IMR-90 (cell line): ENCODE measurements at regions of chr4 and their contacts with region 1.

Region 1: DNA sequence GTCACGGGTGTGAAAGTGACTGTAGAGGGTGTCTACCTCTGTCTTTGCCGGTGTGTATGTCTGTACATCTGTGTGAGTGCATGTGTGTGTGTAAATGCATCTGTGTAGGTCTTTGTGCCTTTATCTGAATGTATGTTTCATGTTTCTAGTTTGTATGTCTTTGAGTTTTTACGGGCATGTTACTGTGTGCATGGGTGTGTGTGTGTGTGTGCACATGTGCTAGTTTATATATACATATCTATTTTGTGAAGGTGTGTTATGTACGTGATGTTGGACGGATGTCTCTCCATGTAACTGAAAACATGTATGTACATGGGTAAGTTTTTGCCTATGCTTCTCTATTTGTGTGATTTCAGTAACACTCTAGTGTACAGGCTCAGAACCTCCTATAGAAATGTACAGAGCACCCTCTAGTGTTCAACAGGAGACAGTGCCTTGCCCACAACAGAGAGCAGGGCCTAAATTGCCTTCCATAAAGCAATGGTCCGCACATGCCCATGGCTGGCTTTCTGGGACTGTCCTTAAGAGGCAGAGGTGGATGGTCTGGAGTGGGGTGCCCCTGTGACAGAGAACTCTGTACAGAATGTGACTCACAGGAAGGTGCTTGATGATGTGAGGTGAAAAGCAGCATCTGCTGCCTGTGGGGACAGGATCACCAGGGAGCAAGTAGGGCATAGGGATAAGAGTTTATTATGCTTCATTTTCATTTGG is 343.5 kb downstream of the RAPGEF2 start:
- DNase-seq: peak; percentile 84
- ATAC-seq: peak; percentile 94
- H3K4me3 ChIP-seq: no peak overlapping the region
- H3K27ac ChIP-seq: no peak overlapping the region
- H3K4me1 ChIP-seq: peaks cover 3% of the 10 kb centered on the region
- H3K27me3 ChIP-seq: no peaks in the 10 kb centered on the region
- CTCF ChIP-seq: peak; percentile 94
- POLR2A ChIP-seq: no peak
- RAD21 ChIP-seq: peak; percentile 97

Region 2: GRCh38 chr4:158253350-158253980 is 1193.0 kb before region 1 on chr4:
- CTCF ChIA-PET with region 1: no interaction called
- POLR2A ChIA-PET with region 1: no interaction called
- dilution Hi-C with region 1: no loop called
- in situ Hi-C with region 1: no loop called
- intact Hi-C with region 1: loop called (anchors 10 kb)
- DNase-seq: peak; percentile 63
- ATAC-seq: peak; percentile 88
- H3K4me3 ChIP-seq: no peak overlapping the region
- H3K27ac ChIP-seq: no peak overlapping the region
- H3K4me1 ChIP-seq: no peaks in the 10 kb centered on the region
- H3K27me3 ChIP-seq: peaks cover 2% of the 10 kb centered on the region; the same call in 1 of the 2 replicates
- CTCF ChIP-seq: peak; percentile 71
- POLR2A ChIP-seq: no peak
- RAD21 ChIP-seq: peak; percentile 73

Region 3: DNA sequence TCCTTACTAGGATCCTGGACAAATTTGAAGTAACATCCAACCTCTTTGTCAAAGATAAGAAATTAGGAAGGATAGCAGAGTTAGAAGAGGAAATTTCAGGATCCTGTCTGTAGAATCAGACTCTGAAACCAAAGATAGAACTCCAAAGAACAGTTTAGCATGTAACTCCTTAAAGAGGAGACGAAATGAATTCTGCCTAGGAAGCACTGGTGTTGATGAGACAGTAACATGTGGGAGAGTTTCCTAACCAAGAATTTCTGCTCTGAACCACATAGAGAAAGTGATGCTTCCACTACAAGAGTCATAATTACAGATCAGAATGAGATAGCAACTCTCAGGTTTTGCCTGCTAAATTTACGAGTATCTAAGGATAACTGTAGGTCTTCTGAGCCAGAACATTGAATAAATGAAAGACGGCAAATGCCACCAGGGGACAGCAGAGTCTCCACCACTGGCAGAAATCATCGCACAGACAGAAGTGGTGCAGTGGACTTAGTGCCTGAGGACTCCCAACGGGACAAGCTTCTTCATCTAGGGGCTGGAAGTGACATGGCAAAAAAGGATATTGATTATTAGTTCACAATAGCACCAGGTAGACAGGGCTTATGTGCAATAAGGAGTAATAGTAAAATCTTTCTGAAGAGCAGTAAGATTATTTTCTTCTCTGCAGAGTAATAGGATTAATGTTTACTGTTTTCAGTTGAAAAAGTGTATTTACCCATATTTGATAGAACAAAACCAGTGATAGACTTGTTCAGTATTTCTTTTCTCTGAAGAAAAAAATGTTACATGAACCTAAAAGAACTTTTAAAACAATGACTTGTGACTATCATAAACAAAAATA is 716.5 kb before region 1 on chr4:
- CTCF ChIA-PET with region 1: no interaction called
- POLR2A ChIA-PET with region 1: no interaction called
- dilution Hi-C with region 1: no loop called
- in situ Hi-C with region 1: loop called (anchors 10 kb)
- intact Hi-C with region 1: loop called (anchors 2 kb)
- DNase-seq: peak; percentile 75
- ATAC-seq: peak; percentile 100
- H3K4me3 ChIP-seq: no peak overlapping the region
- H3K27ac ChIP-seq: no peak overlapping the region
- H3K4me1 ChIP-seq: no peaks in the 10 kb centered on the region
- H3K27me3 ChIP-seq: peaks cover 8% of the 10 kb centered on the region
- CTCF ChIP-seq: peak; percentile 98
- POLR2A ChIP-seq: no peak
- RAD21 ChIP-seq: peak; percentile 97

Region 4: DNA sequence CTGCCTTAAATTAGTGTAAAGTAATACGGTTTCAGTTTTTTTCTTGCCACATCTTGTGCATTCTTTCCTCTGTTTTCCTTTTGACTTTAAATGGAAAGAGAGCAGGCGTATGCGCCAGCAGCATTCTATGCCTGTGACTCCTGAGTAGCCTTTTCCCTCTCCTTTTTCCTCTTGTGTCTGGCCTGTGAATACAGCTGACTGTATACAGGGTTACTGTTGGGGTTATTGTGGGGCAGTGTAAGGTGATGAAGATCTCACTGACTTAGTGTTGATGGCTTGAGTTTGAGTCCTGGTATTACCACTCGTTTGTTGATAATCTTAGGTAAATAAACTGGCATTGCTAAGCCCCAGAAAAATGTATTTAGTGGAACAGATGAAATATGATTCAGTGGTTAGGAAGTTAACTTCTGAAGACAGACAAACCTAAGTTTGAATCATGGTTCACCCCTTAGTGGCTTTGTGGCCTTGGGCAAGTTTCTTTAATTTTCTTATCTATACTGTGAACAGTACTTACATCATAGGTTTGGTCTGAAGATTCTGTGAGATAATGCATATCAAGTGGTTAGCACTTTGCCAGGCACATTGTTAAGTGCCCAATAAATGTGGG is 572.5 kb before region 1 on chr4:
- CTCF ChIA-PET with region 1: no interaction called
- POLR2A ChIA-PET with region 1: no interaction called
- dilution Hi-C with region 1: no loop called
- in situ Hi-C with region 1: no loop called
- intact Hi-C with region 1: loop called (anchors 5 kb)
- DNase-seq: peak; percentile 96
- ATAC-seq: peak; percentile 97
- H3K4me3 ChIP-seq: no peak overlapping the region
- H3K27ac ChIP-seq: no peak overlapping the region
- H3K4me1 ChIP-seq: peaks cover 10% of the 10 kb centered on the region
- H3K27me3 ChIP-seq: no peaks in the 10 kb centered on the region
- CTCF ChIP-seq: no peak
- POLR2A ChIP-seq: no peak
- RAD21 ChIP-seq: no peak; the same call in 1 of the 2 replicates

Region 5: DNA sequence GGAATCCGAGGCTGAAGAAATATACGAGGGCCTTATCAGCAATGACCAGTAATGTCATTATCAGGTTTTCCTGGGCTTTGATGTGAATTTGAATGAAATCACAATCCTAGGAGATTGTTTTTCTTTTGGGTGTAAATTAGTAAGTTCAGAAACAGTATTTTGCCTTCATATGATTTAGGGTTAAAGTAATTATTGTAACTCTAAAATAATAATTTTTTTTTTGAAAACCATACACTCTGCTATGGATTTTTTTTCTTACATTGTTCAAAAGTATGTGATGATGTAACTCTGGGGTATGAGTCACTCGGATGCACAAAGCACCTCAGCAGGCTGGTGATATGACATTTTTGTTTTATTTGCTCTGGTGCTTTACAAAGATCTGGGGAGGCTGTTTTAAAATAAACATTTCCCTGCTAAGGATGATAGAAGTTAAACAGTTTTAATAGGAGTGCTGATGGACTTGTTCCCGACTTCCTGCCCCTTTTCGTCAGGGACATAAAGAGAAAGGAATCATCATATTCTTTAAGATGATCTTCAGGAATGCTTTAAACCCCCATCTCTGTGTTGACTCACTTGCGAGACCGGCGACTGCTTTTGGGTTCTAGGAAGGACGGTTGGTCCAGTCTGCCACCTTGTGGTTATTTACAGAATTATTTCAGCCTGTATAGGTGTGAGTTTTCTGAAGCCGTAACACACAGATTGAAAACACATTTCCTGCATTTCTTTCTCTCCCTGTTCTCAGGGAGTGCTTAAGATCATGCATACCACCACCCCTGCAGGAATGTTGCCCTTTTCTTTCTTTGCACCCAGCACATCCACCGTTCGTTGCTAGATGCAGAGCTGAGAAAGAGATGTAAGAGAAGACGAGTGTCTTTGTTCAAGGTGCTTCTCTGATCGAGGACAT is 271.1 kb before region 1 on chr4:
- CTCF ChIA-PET with region 1: no interaction called
- POLR2A ChIA-PET with region 1: no interaction called
- dilution Hi-C with region 1: no loop called
- in situ Hi-C with region 1: no loop called
- intact Hi-C with region 1: loop called (anchors 2 kb)
- DNase-seq: peak; percentile 94
- ATAC-seq: peak; percentile 88
- H3K4me3 ChIP-seq: peak overlapping the region; percentile 35; the same call in 1 of the 2 replicates
- H3K27ac ChIP-seq: peak overlapping the region; percentile 36; the same call in 1 of the 2 replicates
- H3K4me1 ChIP-seq: peaks cover 15% of the 10 kb centered on the region
- H3K27me3 ChIP-seq: no peaks in the 10 kb centered on the region
- CTCF ChIP-seq: peak; percentile 90
- POLR2A ChIP-seq: peak; percentile 43; the same call in 1 of the 2 replicates
- RAD21 ChIP-seq: peak; percentile 96

Region 6: GRCh38 chr4:159206427-159206871 is 240.0 kb before region 1 on chr4:
- CTCF ChIA-PET with region 1: no interaction called
- POLR2A ChIA-PET with region 1: no interaction called
- dilution Hi-C with region 1: no loop called
- in situ Hi-C with region 1: loop called (anchors 5 kb)
- intact Hi-C with region 1: loop called (anchors 1 kb)
- DNase-seq: peak; percentile 76
- ATAC-seq: peak; percentile 81
- H3K4me3 ChIP-seq: no peak overlapping the region
- H3K27ac ChIP-seq: no peak overlapping the region
- H3K4me1 ChIP-seq: peaks cover 3% of the 10 kb centered on the region
- H3K27me3 ChIP-seq: no peaks in the 10 kb centered on the region
- CTCF ChIP-seq: no peak
- POLR2A ChIP-seq: no peak
- RAD21 ChIP-seq: no peak

Region 7: DNA sequence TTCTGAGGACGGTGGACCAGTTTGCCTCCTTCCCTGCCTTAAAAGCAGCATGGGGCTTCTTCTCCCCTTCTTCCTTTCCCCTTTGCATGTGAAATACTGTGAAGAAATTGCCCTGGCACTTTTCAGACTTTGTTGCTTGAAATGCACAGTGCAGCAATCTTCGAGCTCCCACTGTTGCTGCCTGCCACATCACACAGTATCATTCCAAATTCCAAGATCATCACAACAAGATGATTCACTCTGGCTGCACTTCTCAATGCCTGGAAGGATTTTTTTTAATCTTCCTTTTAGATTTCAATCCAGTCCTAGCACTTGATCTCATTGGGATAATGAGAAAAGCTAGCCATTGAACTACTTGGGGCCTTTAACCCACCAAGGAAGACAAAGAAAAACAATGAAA is 88.2 kb before region 1 on chr4:
- CTCF ChIA-PET with region 1: no interaction called
- POLR2A ChIA-PET with region 1: no interaction called
- dilution Hi-C with region 1: no loop called
- in situ Hi-C with region 1: no loop called
- intact Hi-C with region 1: loop called (anchors 2 kb)
- DNase-seq: peak; percentile 90
- ATAC-seq: peak; percentile 82
- H3K4me3 ChIP-seq: no peak overlapping the region
- H3K27ac ChIP-seq: peak overlapping the region; percentile 81
- H3K4me1 ChIP-seq: peaks cover 13% of the 10 kb centered on the region
- H3K27me3 ChIP-seq: no peaks in the 10 kb centered on the region
- CTCF ChIP-seq: no peak
- POLR2A ChIP-seq: no peak
- RAD21 ChIP-seq: peak; percentile 18; the same call in 1 of the 2 replicates